ENCODE measurements at regions of chr17 and their contacts with region 1.

Region 1: DNA sequence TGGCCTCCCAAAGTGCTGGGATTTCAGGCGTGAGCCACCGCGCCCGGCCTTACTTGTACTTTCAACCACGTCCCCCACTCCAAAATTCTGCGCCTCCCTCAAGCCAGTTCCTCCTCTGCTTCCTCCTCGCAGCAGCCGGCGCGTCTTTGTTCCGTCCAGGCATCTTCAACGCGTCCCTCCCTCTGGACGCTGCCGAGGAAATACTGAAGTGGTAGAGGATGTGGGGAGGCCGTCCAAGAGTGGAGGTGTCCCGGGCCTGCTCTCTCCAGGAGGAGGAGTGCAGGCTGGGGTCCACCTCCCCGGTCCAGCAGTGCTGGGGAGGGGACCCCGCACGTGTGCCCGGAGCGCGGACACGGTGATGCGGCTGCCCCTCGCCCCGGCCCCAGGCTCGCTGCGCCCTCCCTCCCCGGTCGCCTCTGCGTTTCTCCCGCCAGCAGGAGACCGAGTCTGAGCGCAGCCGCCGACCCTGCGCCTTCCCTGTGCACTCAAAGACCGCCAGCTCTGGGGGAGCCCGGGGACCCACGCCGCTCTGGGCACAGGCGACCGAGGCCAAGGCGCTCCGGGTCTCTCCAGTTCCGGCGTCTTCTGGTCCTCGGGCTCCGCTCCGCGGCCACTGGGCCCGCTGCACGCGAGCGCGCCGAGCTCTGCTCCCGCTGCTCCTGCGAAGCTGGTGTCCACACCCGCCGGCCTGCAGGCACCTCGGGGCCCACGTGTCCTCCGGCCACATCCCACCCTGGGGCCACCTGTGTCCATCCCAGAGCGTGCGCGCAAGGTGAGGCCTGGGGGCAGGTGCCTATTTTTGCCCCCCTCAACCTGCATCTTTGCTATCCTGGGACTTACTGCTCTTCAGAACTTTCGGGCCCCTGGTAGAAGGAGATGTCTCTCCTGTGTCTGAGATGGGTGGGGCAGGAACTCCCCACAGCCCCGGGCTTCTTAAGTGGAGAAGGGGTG is 31.7 kb downstream of the OSBPL7 start:
- DNase-seq: peak; percentile 63
- H3K4me3 Mint-ChIP-seq: peak overlapping the region; percentile 58
- H3K27ac Mint-ChIP-seq: no peak overlapping the region
- H3K4me1 Mint-ChIP-seq: peaks cover 14% of the 10 kb centered on the region
- H3K27me3 Mint-ChIP-seq: peaks cover 66% of the 10 kb centered on the region

Region 2: GRCh38 chr17:47663912-47664625 is 125.8 kb before region 1 on chr17:
- CTCF ChIA-PET with region 1: interaction called, 20 read pairs
- POLR2A ChIA-PET with region 1: no interaction called
- DNase-seq: peak; percentile 67
- H3K4me3 Mint-ChIP-seq: no peak overlapping the region
- H3K27ac Mint-ChIP-seq: peak overlapping the region; percentile 71
- H3K4me1 Mint-ChIP-seq: peaks cover 50% of the 10 kb centered on the region
- H3K27me3 Mint-ChIP-seq: no peaks in the 10 kb centered on the region

Measured in activated CD4-positive, alpha-beta memory T cell treated with anti-CD3 and anti-CD28 coated beads, Interleukin-2, amount 10 ng/mL, durations not matched to agents 7 days and 5 days (primary cell).